Ovary (tissue), 10 donors: ENCODE measurements at regions of chr4 and their contacts with region 1.

Region 1: DNA sequence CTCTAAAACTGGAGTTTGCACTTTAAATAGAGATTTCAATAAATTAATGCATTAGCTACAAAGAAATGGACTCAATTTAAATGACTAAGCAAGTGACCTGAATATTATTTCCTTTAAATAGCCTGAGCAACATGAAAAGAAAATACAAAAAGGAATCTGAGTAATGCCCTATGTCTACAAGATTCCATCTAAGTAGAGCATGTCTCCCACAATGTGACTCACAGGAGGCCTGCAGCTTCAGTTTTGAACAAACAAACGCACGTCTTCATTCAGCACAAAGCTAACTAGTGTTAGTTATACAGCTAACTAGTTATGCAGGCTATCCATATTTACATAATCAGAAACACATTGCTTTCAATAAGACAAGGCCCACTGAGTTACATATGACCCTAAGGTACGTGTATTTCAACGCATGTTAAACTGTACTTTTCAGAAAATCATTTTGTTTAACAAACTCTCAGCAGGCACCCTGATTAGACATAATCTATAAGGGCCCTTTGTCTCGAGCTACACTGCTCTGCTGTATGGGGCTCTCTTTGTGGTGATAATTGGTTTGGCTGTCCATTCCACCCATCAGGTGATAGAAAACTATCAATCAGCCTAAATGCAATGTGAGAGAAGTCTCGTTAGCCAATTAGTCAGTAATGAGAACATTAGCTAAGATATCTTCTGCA is 116.5 kb downstream of the MAML3 start:
- DNase-seq: no peak
- H3K4me3 ChIP-seq: no peak overlapping the region
- H3K27ac ChIP-seq: no peak overlapping the region
- H3K4me1 ChIP-seq: no peaks in the 10 kb centered on the region
- H3K27me3 ChIP-seq: no peaks in the 10 kb centered on the region
- CTCF ChIP-seq: no peak
- EP300 ChIP-seq: no peak
- POLR2A ChIP-seq: no peak

Region 2: DNA sequence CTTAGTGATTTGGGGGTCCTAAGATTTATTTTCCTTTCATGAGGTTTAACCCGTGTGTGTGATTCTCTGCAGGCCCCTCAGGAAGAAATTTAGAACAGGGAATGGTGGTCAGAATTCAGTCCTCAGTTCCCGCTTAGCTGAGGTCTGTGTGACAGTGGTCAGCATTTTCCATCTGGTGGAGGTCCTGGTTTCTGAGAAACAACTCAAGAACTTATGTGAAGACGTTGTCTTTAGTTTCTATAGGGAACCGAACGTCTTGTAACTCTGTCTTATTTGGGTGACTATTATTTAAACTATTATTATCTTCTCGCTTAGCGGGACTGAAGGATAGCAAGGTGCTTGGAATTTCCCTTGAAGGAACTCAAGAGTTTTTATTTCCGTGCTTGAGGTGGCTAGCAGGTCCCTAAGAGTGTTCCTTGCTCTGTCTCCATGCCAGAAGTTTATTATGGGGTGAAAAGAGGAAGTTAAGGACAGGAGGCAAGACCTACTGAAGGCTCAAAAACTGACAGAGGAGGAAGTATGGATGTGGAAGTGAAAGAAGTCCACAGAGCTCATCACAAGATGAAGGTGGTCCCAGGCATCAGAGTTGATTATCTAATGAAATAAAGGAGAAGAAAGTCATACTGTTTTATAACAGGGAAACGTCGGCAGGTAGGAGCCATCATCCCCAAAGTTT is 362.5 kb before region 1 on chr4:
- intact Hi-C with region 1: loop called in 1 of 4 experiments (anchors 10 kb)
- DNase-seq: no peak
- H3K4me3 ChIP-seq: no peak overlapping the region
- H3K27ac ChIP-seq: no peak overlapping the region
- H3K4me1 ChIP-seq: no peaks in the 10 kb centered on the region
- H3K27me3 ChIP-seq: no peaks in the 10 kb centered on the region
- CTCF ChIP-seq: no peak
- EP300 ChIP-seq: no peak
- POLR2A ChIP-seq: no peak